ENCODE measurements at regions of chr3 and their contacts with region 1.

Region 1: DNA sequence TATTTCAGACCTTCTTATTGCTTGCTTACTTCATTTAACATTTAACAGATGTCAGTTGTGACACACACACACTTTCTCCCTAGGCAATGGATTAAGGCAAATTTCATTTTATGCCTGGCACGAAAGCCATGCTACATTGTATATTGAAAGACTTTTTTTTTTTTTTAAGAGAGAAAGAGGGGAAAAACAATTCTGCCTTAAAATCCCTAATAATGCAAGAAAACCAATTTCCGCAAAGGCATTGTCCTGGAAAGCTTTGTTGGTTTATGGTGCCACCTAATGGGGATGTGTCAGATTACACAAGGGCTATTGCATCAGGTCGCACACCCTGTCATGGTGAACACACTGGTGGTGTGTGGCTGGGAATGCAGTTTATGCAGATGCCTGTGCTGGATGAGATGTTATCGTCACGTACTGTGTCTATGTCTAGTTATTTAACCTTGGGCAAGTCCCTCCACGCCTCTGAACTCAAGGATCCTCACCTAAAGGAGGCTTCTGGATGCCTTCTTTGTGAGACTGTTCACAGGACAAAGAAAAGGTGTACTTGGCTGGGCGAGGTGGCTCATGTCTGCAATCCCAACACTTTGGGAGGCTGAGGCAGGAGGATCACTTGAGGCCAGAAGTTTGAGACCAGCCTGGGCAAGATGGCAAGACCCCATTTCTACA is 37.3 kb upstream of the RFTN1 start:
- DNase-seq: no peak
- ATAC-seq: peak; percentile 82

Region 2: GRCh38 chr3:16266714-16267113 is 284.1 kb before region 1 on chr3:
- intact Hi-C with region 1: loop called (anchors 1 kb)
- DNase-seq: no peak
- ATAC-seq: no peak

Region 3: GRCh38 chr3:16290007-16290826 is 260.6 kb before region 1 on chr3:
- intact Hi-C with region 1: loop called (anchors 1 kb)
- DNase-seq: no peak
- ATAC-seq: no peak

Region 4: GRCh38 chr3:16496408-16497222 is 54.2 kb before region 1 on chr3:
- intact Hi-C with region 1: no loop called
- DNase-seq: no peak
- ATAC-seq: no peak

Measured in Right ventricle myocardium inferior (tissue), 1 donor.